Activated CD4-positive, alpha-beta T cell treated with anti-CD3 and anti-CD28 coated beads, Interleukin-2, amount 10 ng/mL, durations not matched to agents 24 days and 14 days (primary cell): ENCODE measurements at regions of chr5 and their contacts with region 1.

Region 1: DNA sequence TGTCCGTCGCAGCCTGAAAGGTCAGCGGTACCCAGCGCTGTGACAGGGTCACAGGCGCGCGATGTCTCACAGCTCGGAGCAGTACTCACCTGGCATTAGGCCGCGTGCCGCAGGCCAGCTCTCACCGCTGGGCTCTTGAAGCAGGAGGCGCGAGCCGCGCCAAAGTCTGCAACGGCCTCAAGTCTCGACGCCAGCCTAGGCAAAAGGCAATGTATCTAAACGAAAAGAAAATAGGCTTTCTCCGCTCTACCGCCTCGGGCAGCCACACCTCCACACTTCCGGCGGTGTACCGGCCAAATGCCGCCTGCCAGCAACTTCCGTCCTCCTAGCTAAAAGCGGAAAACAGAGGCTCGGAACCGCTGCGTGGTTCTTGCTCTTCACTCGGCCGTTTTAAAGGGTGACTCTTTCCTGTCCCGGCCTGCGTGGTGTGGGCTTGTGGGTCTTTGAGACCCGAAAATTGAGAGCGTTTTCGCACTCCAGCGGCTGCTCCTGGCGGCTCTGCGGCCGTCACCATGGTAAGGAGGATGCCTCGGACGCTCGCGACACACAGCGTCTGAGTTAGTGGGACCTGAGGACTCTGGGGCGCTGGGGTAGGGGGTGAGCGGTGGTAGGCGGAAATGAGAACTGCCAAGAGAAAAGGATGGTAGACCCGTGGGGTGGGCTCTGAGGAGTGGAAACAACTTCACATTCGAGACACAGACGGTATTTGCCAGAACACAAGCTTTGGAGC is at the starts of genes GFM2 and NSA2:
- DNase-seq: peak; percentile 98
- H3K4me3 Mint-ChIP-seq: peak within 1 kb of the TSS; percentile 99
- H3K27ac Mint-ChIP-seq: peak within 1 kb of the TSS; percentile 98
- H3K4me1 Mint-ChIP-seq: peaks cover 25% of the 10 kb centered on the region
- H3K27me3 Mint-ChIP-seq: no peaks in the 10 kb centered on the region
- total RNA-seq, gene GFM2: 37.9 and 42.7 TPM in 2 replicates
- total RNA-seq, gene NSA2: 94.0 and 95.8 TPM in 2 replicates

Region 2: DNA sequence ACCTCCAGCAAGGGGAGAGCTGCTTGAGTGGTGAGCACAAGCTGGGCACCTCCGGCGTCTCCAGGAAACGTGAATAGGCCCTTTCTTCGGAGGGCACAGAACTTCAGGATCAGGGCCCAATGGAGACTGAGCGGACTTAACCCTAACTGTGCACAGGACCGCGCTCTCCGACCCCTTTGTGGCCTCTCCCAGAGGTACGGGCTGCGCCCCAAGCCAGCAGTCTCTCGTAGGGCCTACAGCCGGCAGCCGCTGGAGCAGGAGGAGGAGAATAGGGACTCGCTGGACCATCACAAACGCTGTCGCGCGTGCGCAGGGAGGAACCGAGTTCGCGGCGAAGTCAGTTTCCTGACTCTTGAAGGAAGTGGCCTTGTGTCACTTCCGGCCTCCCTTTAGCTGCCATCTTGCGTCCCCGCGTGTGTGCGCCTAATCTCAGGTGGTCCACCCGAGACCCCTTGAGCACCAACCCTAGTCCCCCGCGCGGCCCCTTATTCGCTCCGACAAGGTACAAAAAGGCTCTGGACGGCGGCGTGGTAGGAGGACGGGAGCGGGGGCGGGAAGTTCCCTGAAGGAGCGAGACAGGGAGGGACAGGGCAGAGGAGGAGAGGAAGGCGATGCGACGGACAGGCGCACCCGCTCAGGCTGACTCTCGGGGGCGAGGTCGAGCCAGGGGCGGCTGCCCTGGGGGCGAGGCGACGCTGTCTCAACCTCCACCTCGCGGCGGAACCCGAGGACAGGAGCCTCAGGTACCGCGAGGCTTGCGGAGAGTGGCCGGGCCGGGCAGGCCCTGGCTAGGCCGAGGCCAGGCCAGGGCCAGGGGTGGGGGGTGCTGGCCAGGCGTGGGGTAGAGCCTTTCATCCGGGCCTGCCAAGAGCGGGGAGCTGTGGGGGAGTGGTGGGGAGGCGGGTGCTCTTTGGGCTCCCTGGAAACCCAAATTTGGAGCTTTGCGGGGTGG is 1268.7 kb before region 1 on chr5 and contains the start of gene BTF3:
- intact Hi-C with region 1: loop called (anchors 5 kb)
- DNase-seq: peak; percentile 98
- H3K4me3 Mint-ChIP-seq: peak within 1 kb of the TSS; percentile 99
- H3K27ac Mint-ChIP-seq: peak within 1 kb of the TSS; percentile 100
- H3K4me1 Mint-ChIP-seq: peaks cover 30% of the 10 kb centered on the region
- H3K27me3 Mint-ChIP-seq: peaks cover 12% of the 10 kb centered on the region
- total RNA-seq, gene BTF3: 960 and 998 TPM in 2 replicates

Region 3: GRCh38 chr5:74684900-74685851 is 81.8 kb before region 1 on chr5 and contains the start of gene HEXB:
- intact Hi-C with region 1: loop called (anchors 5 kb)
- DNase-seq: peak; percentile 96
- H3K4me3 Mint-ChIP-seq: peak within 1 kb of the TSS; percentile 90
- H3K27ac Mint-ChIP-seq: peak within 1 kb of the TSS; percentile 83
- H3K4me1 Mint-ChIP-seq: peaks cover 20% of the 10 kb centered on the region
- H3K27me3 Mint-ChIP-seq: peaks cover 13% of the 10 kb centered on the region
- total RNA-seq, gene HEXB: 60.7 and 61.2 TPM in 2 replicates

Region 4: GRCh38 chr5:74865804-74866595 is 99.0 kb after region 1 on chr5 and contains the start of gene FAM169A:
- intact Hi-C with region 1: loop called (anchors 1 kb)
- DNase-seq: peak; percentile 81
- H3K4me3 Mint-ChIP-seq: peak within 1 kb of the TSS; percentile 81
- H3K27ac Mint-ChIP-seq: peak within 1 kb of the TSS; percentile 64
- H3K4me1 Mint-ChIP-seq: peaks cover 3% of the 10 kb centered on the region
- H3K27me3 Mint-ChIP-seq: peaks cover 24% of the 10 kb centered on the region
- total RNA-seq, gene FAM169A: 1.8 and 2.6 TPM in 2 replicates

Region 5: GRCh38 chr5:74877624-74878304 is 110.8 kb after region 1 on chr5:
- intact Hi-C with region 1: no loop called
- DNase-seq: no peak
- H3K4me3 Mint-ChIP-seq: no peak overlapping the region
- H3K27ac Mint-ChIP-seq: no peak overlapping the region
- H3K4me1 Mint-ChIP-seq: no peaks in the 10 kb centered on the region
- H3K27me3 Mint-ChIP-seq: peaks cover 12% of the 10 kb centered on the region

Region 6: GRCh38 chr5:74919487-74919886 is 152.5 kb after region 1 on chr5:
- intact Hi-C with region 1: loop called (anchors 1 kb)
- DNase-seq: peak; percentile 58
- H3K4me3 Mint-ChIP-seq: no peak overlapping the region
- H3K27ac Mint-ChIP-seq: no peak overlapping the region
- H3K4me1 Mint-ChIP-seq: no peaks in the 10 kb centered on the region
- H3K27me3 Mint-ChIP-seq: peaks cover 4% of the 10 kb centered on the region